Panc1 (cell line): ENCODE measurements at regions of chr15 and their contacts with region 1.

Region 1: GRCh38 chr15:75453703-75454470 is 2.4 kb upstream of the SIN3A start:
- DNase-seq: peak; percentile 100
- ATAC-seq: peak; percentile 59
- H3K4me3 ChIP-seq: peak overlapping the region; percentile 98
- H3K27ac ChIP-seq: peak overlapping the region; percentile 99
- H3K4me1 ChIP-seq: peaks cover 18% of the 10 kb centered on the region
- H3K27me3 ChIP-seq: no peaks in the 10 kb centered on the region
- CTCF ChIP-seq: no peak

Region 2: DNA sequence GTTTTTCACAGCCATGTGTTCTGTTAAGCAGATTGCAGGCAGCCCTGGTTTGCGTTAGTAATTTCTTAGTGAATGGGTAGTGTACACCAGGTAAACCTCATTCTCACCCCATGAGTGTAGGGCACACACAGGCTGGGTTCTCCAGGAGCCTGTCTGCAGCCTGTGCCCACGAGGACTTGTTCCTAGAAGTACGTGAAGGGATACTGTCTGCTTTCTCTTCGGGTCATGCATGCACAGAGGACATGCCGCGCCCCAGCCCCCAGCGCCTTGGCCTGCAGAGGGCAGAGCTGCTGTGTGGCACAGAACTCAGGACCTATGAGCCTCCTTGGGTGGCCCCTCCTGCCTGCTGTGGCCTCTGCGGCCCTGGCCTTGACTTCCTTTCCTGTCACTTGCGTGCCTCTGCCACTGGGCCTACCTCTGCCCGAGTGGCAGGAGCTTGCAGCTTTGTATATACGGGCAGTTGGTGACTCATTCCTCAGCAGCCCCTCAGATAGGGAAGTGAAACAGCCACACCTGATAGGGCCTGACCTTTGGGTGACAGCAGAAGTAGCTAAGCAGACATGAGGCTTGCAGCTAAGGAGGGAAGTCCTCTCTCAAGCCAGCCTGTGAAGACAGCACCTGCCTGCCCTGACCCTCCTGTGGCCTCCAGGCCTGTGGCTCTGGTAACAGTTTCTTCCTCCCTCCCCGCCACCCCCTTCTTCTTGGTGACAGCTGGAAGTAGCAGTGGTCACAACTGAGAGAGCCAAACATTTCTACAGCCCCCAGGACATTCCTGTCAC is 411.0 kb before region 1 on chr15:
- CTCF ChIA-PET with region 1: interaction called, 16 read pairs
- POLR2A ChIA-PET with region 1: no interaction called
- in situ Hi-C with region 1: no loop called
- intact Hi-C with region 1: no loop called
- DNase-seq: no peak
- ATAC-seq: peak; percentile 88
- H3K4me3 ChIP-seq: no peak overlapping the region
- H3K27ac ChIP-seq: peak overlapping the region; percentile 44; the same call in 1 of the 2 replicates
- H3K4me1 ChIP-seq: peaks cover 18% of the 10 kb centered on the region
- H3K27me3 ChIP-seq: no peaks in the 10 kb centered on the region
- CTCF ChIP-seq: no peak; the same call in 1 of the 2 replicates

Region 3: GRCh38 chr15:75483961-75484360 is 30.1 kb after region 1 on chr15:
- CTCF ChIA-PET with region 1: no interaction called
- POLR2A ChIA-PET with region 1: interaction called, 13 read pairs
- in situ Hi-C with region 1: no loop called
- intact Hi-C with region 1: no loop called
- DNase-seq: no peak
- ATAC-seq: no peak
- H3K4me3 ChIP-seq: no peak overlapping the region
- H3K27ac ChIP-seq: no peak overlapping the region
- H3K4me1 ChIP-seq: no peaks in the 10 kb centered on the region
- H3K27me3 ChIP-seq: no peaks in the 10 kb centered on the region
- CTCF ChIP-seq: no peak

Region 4: DNA sequence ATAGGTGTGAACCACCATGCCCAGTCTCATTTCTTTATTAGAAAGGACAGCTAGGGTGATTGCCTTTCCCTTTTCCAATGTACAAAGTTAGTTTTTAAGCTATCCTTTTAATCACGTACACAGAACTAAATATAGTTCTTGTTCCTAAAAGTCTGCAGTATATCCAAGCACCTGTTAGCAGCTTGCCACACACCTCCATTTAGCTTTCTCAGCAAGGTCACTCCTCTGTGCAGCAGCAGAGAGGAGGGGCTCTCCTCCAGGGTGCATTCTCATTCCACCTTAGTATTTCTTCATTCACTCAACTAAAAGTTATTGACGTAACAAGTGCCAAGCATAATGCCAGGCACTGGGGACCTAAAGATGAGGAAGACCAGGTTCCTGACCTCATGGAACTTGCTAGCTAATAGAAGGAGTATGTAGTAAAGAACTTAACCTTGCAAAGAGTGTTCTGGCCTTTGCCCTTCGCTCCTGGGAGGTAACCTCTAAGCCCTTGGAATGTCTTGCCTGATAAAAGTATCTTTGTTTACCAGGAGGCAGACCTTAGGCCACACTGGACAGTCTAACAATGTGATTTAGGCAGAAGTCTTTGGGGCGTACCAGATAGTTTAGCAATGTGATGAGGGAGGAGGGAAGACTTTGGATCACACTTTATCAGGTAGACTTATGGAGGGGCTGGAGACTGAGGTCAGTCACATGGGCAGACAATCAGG is 137.9 kb after region 1 on chr15:
- CTCF ChIA-PET with region 1: no interaction called
- POLR2A ChIA-PET with region 1: no interaction called
- in situ Hi-C with region 1: no loop called
- intact Hi-C with region 1: no loop called
- DNase-seq: no peak
- ATAC-seq: peak; percentile 48
- H3K4me3 ChIP-seq: no peak overlapping the region
- H3K27ac ChIP-seq: no peak overlapping the region
- H3K4me1 ChIP-seq: no peaks in the 10 kb centered on the region
- H3K27me3 ChIP-seq: no peaks in the 10 kb centered on the region
- CTCF ChIP-seq: no peak

Region 5: DNA sequence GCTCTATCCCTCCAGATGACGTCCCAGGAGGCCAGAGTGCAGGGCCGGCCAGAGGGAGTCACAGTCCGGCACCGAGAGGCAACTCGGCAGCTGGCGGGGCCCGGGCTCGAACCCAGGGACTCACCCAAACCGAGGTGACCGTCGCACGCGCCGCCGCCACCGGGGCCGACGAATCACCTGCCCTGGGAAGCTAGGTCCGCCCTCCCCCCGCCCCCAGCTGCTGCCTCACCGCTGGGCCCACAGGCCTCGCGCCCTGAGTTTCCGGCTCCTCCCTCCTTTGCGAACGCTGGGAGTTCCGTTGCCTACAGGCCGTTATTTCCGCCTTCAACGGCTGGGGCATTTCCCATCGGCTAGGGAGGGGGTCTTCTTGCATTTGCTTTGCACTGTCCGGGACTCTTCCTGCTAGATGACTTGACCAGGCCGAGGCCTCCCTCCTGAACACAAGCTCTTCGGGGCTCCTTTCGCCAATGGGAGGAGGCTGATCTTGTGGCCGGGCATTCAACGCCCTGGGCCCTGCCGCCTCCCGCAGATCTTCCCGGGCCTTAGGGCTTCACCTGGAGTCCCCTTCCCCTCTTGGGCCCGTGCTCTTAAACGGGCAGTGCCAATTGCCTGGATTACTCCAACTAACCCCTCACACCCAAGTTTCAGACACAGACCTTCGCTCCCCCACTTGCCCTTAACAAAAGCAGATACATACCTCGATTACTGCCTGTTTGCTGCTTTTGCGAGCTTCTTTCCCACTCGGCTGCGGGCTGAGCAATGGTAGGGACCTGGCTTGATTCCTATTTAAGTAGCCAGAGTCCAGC is 171.9 kb after region 1 on chr15 and contains the start of gene SNUPN:
- CTCF ChIA-PET with region 1: no interaction called
- POLR2A ChIA-PET with region 1: interaction called, 21 read pairs
- in situ Hi-C with region 1: no loop called
- intact Hi-C with region 1: no loop called
- DNase-seq: peak; percentile 69
- ATAC-seq: peak; percentile 97
- H3K4me3 ChIP-seq: peak within 1 kb of the TSS; percentile 86 to 91
- H3K27ac ChIP-seq: peak within 1 kb of the TSS; percentile 100
- H3K4me1 ChIP-seq: peaks cover 18% of the 10 kb centered on the region
- H3K27me3 ChIP-seq: no peaks in the 10 kb centered on the region
- CTCF ChIP-seq: no peak
- total RNA-seq, gene SNUPN: 52.1 TPM

Region 6: DNA sequence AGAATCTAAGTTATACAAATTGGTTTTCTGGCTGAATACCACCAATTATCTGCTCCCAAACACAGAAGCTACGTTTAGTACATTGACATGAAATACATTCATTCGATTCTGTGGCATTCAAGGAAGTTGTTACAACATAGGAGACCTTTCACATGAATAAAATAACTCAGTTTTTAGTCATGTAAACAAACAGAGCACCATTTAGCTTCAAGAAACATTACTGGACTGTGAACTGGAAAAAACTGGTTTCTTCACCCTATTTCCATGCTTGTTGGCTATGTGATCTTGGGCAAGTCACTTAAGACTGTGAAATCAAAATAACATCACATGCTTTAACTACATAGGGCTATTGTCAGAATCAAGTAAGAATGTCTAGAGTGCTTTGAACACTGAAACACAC is 512.2 kb after region 1 on chr15:
- CTCF ChIA-PET with region 1: no interaction called
- POLR2A ChIA-PET with region 1: interaction called, 13 read pairs
- in situ Hi-C with region 1: no loop called
- intact Hi-C with region 1: no loop called
- DNase-seq: no peak
- ATAC-seq: no peak
- H3K4me3 ChIP-seq: no peak overlapping the region
- H3K27ac ChIP-seq: no peak overlapping the region
- H3K4me1 ChIP-seq: peaks cover 7% of the 10 kb centered on the region; the same call in 1 of the 2 replicates
- H3K27me3 ChIP-seq: no peaks in the 10 kb centered on the region; the same call in 1 of the 2 replicates
- CTCF ChIP-seq: no peak